H1 (cell line): ENCODE measurements at regions of chr9 and their contacts with region 1.

Region 1: DNA sequence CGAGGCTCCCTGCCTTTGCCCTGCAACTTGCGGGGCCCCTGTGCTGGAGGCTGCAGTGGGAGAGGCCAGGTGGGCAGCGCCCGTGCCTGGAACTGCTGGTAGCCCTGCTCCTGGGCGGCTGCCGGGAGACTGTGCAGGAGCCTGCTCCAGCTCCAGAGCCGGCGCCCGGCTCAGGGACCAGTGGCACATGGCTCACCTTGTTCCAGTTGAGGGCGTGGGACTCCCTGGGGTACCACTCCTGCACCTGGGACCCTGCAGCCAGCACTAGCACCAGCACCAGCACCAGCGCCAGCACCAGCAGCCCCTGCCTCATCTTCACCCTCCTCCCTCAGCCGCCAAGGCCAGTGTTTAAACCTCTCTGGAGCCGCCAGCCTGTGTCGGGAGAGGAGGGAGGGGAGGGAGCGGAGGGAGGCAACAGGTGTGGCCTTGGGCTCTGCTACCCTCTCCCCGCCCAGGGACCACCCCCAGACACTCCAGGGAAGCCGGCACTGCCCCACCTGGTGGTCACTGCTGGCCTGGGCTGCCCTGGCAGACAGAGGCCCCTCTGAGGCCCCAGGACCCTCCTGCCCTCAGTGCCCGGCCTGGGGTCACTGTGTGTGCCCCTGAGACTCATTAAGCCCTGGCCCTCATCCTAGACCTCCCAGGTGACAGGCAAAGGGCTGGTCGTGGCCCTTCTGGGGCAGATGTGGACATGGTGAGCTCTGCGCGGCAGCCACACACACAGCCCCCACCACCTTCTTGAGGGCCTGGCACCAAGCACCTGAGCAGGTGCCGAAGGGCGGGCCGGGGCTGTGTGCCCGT is at the start of gene LCN10:
- DNase-seq: peak in 1 of 2 experiments; percentile 89
- H3K4me3 ChIP-seq: peak within 1 kb of the TSS in 2 of 4 experiments; percentile 19 to 47; a peak in 2 of 8 replicates
- H3K27ac ChIP-seq: no peak within 1 kb of the TSS
- H3K4me1 ChIP-seq: peaks cover 0 to 20% (median 8%) of the 10 kb centered on the region in 4 experiments; a peak in 6 of 7 replicates
- H3K27me3 ChIP-seq: peaks cover 0 to 4% (median 0%) of the 10 kb centered on the region in 4 experiments; a peak in 2 of 7 replicates
- CTCF ChIP-seq: peak in 2 of 3 experiments; percentile 58 to 72; a peak in 3 of 4 replicates
- EP300 ChIP-seq: no peak
- POLR2A ChIP-seq: no peak
- RAD21 ChIP-seq: peak in 1 of 2 experiments; percentile 29; a peak in 1 of 4 replicates
- total RNA-seq, gene LCN10: 2.8 and 4.8 TPM in 2 replicates

Region 2: DNA sequence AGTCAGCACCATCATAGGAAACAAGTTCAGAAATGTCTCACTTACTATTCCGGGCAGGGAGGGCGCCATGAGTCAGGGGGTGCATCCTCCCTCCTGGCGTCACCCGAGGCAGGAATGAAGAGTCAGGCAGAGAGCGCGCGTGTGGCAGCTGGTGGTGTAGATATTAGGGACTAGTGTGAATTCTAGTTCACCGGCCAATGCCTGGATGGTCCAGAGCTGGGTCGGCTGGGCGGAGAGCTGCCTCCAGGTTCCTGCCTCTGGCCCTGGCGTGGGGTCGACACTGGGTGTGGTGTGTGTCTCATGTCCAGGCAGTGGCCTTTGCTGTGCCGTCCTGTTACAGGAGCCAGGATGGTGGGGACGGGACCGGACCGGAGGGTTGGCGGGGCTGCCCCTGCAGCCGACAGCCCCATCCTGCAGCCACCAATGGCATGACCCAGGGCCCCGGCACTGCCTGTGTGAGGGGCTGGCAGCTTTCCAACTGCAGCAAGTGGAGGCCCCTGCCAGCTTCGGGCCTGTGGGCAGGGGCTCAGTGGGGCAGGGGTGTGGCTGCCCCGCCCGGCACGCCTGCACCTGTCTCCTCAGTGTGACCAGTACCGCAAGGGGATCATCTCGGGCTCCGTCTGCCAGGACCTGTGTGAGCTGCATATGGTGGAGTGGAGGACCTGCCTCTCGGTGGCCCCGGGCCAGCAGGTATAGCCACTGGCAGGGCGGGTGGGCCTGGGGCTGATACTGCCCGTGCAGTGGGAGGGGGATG is 21.3 kb before region 1 on chr9:
- CTCF ChIA-PET with region 1: interaction called, 7 read pairs
- POLR2A ChIA-PET with region 1: interaction called, 223 read pairs
- DNase-seq: no peak
- H3K4me3 ChIP-seq: no peak overlapping the region
- H3K27ac ChIP-seq: no peak overlapping the region; the same call in 1 of the 2 replicates
- H3K4me1 ChIP-seq: peaks cover 0 to 19% (median 4%) of the 10 kb centered on the region in 4 experiments; a peak in 5 of 7 replicates
- H3K27me3 ChIP-seq: no peaks in the 10 kb centered on the region
- CTCF ChIP-seq: no peak
- EP300 ChIP-seq: no peak
- POLR2A ChIP-seq: no peak
- RAD21 ChIP-seq: no peak

Region 3: DNA sequence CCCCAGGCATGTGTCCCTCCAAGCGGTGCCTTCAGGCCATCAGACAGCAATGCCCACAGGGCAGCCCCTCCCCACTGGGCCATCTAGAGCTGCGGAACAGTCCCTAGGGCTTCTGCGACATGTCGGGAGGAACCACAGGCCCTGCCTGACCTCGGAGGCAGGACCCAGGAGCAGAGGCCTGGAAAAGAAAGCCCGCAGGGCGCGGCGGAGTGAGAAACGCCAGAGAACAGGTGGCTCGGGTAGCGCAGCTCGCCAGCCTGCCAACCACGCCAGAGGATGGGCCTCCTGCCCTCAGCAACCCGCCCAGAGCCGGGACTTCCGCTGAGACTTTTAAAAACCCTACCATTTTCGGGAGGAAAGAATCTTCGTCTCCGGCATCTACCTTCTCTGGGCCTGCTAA is 14.5 kb after region 1 on chr9:
- CTCF ChIA-PET with region 1: interaction called, 33 read pairs
- POLR2A ChIA-PET with region 1: interaction called, 4 read pairs
- DNase-seq: no peak
- H3K4me3 ChIP-seq: no peak overlapping the region
- H3K27ac ChIP-seq: no peak overlapping the region
- H3K4me1 ChIP-seq: peaks cover 0 to 6% (median 2%) of the 10 kb centered on the region in 4 experiments; a peak in 4 of 7 replicates
- H3K27me3 ChIP-seq: no peaks in the 10 kb centered on the region
- CTCF ChIP-seq: no peak
- EP300 ChIP-seq: no peak
- POLR2A ChIP-seq: no peak
- RAD21 ChIP-seq: no peak